ENCODE measurements at regions of chr14 and their contacts with region 1.

Region 1: DNA sequence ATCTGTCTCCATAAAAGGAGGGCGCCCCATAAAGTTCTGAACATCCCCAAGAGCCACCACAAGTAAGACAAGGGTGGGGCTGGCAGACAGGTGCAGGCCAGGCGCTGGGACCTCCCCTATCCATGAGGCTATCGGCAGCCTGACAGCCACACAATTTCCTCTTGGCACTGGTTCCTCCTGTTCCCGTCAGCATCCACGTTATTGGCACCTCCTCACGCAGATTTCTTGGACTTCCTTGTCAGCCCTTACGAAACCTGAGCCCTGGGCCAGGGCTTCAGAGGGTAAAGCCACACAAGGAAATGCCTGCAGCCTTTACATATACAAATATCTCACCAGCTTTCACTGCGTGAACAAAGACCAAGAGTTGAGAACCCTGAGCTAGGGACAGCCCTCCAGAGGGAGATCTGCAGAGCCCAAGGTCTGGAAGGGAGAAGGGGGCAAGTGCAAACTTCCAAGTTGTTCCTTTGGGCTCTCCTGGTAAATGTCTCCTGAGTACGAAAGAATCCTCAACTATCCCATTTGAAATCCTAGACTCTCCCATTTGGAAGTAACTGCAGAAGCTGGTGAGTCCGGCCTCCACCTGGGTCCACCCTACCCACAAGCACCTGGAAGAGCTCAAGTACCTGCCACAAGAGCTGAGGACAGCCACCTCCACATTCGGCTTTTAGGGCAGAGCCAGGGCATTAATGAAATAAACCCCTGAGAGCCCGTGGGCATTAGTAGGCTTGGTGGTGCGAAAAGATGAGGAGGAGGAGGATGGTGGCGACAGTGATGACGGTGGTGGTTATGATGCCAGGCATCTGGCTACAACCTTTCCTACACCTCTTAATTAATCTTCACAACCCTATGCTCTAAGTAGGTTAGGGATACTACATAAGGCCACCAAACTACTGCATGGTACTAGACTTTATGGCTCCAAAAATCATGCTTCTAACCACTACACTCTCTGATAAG is 5.5 kb upstream of the TC2N start:
- DNase-seq: peak; percentile 42
- H3K4me3 Mint-ChIP-seq: peak overlapping the region; percentile 68
- H3K27ac Mint-ChIP-seq: peak overlapping the region; percentile 95
- H3K4me1 Mint-ChIP-seq: peaks cover 81% of the 10 kb centered on the region
- H3K27me3 Mint-ChIP-seq: no peaks in the 10 kb centered on the region

Region 2: DNA sequence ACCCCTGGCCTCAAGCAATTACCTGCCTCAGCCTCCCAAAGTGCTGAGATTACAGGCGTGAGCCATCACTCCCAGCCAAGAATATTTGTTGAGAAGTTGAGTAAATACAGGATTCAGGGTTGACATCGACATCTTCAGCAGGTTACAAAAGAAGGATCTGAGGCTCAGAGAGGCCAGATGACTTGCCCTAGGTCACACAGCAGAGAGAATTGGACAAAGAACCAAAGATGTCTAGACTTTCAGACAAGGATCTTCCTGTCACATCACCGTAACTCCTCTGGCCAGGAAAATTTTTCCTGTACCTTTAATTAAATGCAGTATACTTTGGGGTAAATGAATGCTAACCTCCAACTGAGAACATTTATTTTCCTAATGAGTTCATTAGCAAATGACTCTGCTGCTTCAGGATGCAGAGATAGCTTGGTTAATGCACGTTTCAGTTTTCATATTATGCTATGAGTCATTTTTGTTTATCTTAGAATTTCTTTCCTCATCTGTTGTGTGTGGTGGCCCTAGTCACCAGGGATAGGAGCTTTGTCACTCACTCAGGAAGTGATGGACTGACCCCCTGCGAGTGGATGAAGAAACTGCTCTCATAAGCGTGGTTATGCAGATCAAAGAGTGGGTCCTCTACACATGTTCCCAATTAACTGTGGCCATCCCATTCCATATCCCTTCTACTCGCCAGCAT is 14.4 kb before region 1 on chr14:
- CTCF ChIA-PET with region 1: interaction called, 10 read pairs
- POLR2A ChIA-PET with region 1: interaction called, 44 read pairs
- DNase-seq: peak; percentile 38
- H3K4me3 Mint-ChIP-seq: peak overlapping the region; percentile 16
- H3K27ac Mint-ChIP-seq: peak overlapping the region; percentile 81
- H3K4me1 Mint-ChIP-seq: peaks cover 78% of the 10 kb centered on the region
- H3K27me3 Mint-ChIP-seq: no peaks in the 10 kb centered on the region

Region 3: DNA sequence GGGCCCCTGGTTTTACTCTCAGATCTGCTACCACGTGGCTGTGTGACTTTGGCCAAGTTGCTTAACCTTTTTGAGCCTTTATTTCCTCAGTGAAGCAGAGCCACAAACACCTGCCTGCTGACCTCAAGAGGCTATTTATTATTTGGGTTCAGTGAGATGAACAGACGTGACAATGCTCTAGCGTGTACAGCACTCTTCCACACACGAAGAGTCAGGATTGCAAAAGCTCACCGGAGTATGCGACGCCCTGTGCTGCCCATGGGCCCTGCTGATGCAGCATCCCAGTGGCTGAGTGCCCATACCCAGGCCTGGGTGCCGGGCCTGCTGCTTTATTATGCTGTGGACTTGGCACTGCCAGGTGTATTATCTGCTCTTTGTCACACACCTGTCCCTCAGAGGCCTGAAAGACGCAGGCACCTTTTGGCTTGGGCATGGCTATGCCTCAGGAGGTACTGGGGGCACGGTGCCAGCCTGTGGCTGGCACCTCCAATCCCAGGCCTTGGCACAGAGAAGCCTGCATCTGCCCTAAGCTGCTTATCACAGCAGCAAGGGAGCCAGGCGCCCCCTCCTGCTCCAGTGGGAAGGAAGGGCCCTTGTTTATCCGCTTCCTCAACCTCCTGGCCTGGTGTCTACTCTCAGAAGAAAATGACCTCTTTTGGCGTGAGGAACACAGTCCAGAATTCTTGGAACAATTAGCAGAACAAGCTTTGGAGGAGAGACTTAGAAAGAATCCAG is 16.9 kb after region 1 on chr14:
- CTCF ChIA-PET with region 1: interaction called, 8 read pairs
- POLR2A ChIA-PET with region 1: interaction called, 13 read pairs
- DNase-seq: no peak
- H3K4me3 Mint-ChIP-seq: no peak overlapping the region
- H3K27ac Mint-ChIP-seq: no peak overlapping the region
- H3K4me1 Mint-ChIP-seq: peaks cover 40% of the 10 kb centered on the region
- H3K27me3 Mint-ChIP-seq: no peaks in the 10 kb centered on the region